ENCODE measurements at regions of chr11 and their contacts with region 1.

Region 1: GRCh38 chr11:45147017-45147728 is 734 bp downstream of the PRDM11 start:
- DNase-seq: peak; percentile 95
- ATAC-seq: peak; percentile 97
- H3K4me3 ChIP-seq: peak overlapping the region; percentile 60 to 92 (median 72)
- H3K4me3 Mint-ChIP-seq: peak overlapping the region; percentile 92
- H3K27ac ChIP-seq: peak overlapping the region; percentile 63 to 86
- H3K27ac Mint-ChIP-seq: peak overlapping the region; percentile 95
- H3K4me1 ChIP-seq: peaks cover 19 to 27% of the 10 kb centered on the region in 2 donors
- H3K4me1 Mint-ChIP-seq: peaks cover 42% of the 10 kb centered on the region
- H3K27me3 ChIP-seq: peaks cover 0 to 12% (median 8%) of the 10 kb centered on the region in 4 experiments
- H3K27me3 Mint-ChIP-seq: peaks cover 12% of the 10 kb centered on the region
- CTCF ChIP-seq: no peak

Region 2: GRCh38 chr11:44943118-44943517 is 204.1 kb before region 1 on chr11:
- CTCF ChIA-PET with region 1: no interaction called
- POLR2A ChIA-PET with region 1: no interaction called
- intact Hi-C with region 1: loop called (anchors 2 kb)
- DNase-seq: peak; percentile 89
- ATAC-seq: peak; percentile 93
- H3K4me3 ChIP-seq: peak overlapping the region in 4 of 5 experiments; percentile 10 to 53 (median 26)
- H3K4me3 Mint-ChIP-seq: peak overlapping the region; percentile 90
- H3K27ac ChIP-seq: peak overlapping the region; percentile 38 to 67
- H3K27ac Mint-ChIP-seq: peak overlapping the region; percentile 95
- H3K4me1 ChIP-seq: peaks cover 57 to 74% of the 10 kb centered on the region in 2 donors
- H3K4me1 Mint-ChIP-seq: peaks cover 92% of the 10 kb centered on the region
- H3K27me3 ChIP-seq: no peaks in the 10 kb centered on the region
- H3K27me3 Mint-ChIP-seq: no peaks in the 10 kb centered on the region
- CTCF ChIP-seq: no peak

Region 3: DNA sequence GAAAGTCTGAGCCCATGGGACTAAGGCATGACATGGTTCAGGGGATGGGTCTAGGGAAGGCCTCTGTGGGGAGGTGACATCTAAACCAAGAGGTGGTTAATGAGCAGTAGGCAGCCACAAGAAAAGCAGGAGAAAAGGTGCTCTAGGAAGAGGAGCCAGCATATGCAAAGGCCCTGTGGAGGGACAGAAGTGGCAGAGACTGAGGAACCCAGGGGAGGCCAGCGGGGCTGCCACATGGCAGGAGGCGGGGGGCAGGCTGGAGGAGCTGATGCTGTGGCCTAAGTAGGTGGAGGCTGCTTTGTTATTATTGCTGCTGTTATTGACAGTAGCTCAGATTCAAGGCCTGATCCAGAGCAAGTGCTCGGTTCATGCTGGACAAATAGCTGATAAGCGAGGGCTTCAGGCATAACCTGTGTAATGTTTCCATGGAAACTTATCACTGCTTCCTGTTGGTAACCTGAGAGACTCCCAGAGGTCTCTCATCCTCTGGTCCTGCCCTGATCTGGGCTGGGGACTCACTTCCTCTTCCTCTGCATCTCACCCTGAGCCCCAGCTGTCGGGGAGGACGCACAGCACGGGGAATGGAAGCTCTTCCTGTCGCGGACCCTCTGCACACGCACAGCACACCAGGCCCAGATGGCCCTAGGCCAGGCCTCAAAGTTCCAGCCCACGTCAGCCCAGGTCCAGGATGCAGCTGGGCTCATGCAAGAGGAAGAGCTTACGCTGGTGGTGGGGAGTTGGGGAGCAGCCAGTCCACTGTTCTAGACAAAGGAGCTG is 121.3 kb before region 1 on chr11:
- CTCF ChIA-PET with region 1: no interaction called
- POLR2A ChIA-PET with region 1: interaction called, 3 read pairs
- intact Hi-C with region 1: loop called (anchors 5 kb)
- DNase-seq: peak; percentile 82
- ATAC-seq: peak; percentile 50
- H3K4me3 ChIP-seq: no peak overlapping the region
- H3K4me3 Mint-ChIP-seq: peak overlapping the region; percentile 51
- H3K27ac ChIP-seq: peak overlapping the region; percentile 72 to 79
- H3K27ac Mint-ChIP-seq: peak overlapping the region; percentile 96
- H3K4me1 ChIP-seq: peaks cover 46 to 58% of the 10 kb centered on the region in 2 donors
- H3K4me1 Mint-ChIP-seq: peaks cover 66% of the 10 kb centered on the region
- H3K27me3 ChIP-seq: peaks cover 0 to 2% (median 0%) of the 10 kb centered on the region in 4 experiments
- H3K27me3 Mint-ChIP-seq: no peaks in the 10 kb centered on the region
- CTCF ChIP-seq: no peak

Region 4: GRCh38 chr11:45339729-45340519 is 192.8 kb after region 1 on chr11:
- CTCF ChIA-PET with region 1: no interaction called
- POLR2A ChIA-PET with region 1: no interaction called
- intact Hi-C with region 1: loop called (anchors 1 kb)
- DNase-seq: peak; percentile 93
- ATAC-seq: peak; percentile 100
- H3K4me3 ChIP-seq: peak overlapping the region; percentile 23 to 65 (median 50)
- H3K4me3 Mint-ChIP-seq: peak overlapping the region; percentile 92
- H3K27ac ChIP-seq: no peak overlapping the region
- H3K27ac Mint-ChIP-seq: peak overlapping the region; percentile 76
- H3K4me1 ChIP-seq: peaks cover 8 to 13% of the 10 kb centered on the region in 2 donors
- H3K4me1 Mint-ChIP-seq: peaks cover 18% of the 10 kb centered on the region
- H3K27me3 ChIP-seq: peaks cover 0 to 4% (median 2%) of the 10 kb centered on the region in 4 experiments
- H3K27me3 Mint-ChIP-seq: peaks cover 26% of the 10 kb centered on the region
- CTCF ChIP-seq: peak; percentile 90

Region 5: GRCh38 chr11:46700241-46701077 is 1553.3 kb after region 1 on chr11 and contains the starts of genes ARHGAP1 and ZNF408:
- CTCF ChIA-PET with region 1: no interaction called
- POLR2A ChIA-PET with region 1: no interaction called
- intact Hi-C with region 1: loop called (anchors 5 kb)
- DNase-seq: peak; percentile 99
- ATAC-seq: peak; percentile 90
- H3K4me3 ChIP-seq: peak within 1 kb of the TSS; percentile 87 to 100 (median 98)
- H3K4me3 Mint-ChIP-seq: peak within 1 kb of the TSS; percentile 96
- H3K27ac ChIP-seq: peak within 1 kb of the TSS; percentile 47 to 86
- H3K27ac Mint-ChIP-seq: peak within 1 kb of the TSS; percentile 93
- H3K4me1 ChIP-seq: peaks cover 30 to 39% of the 10 kb centered on the region in 2 donors
- H3K4me1 Mint-ChIP-seq: peaks cover 43% of the 10 kb centered on the region
- H3K27me3 ChIP-seq: no peaks in the 10 kb centered on the region
- H3K27me3 Mint-ChIP-seq: no peaks in the 10 kb centered on the region
- CTCF ChIP-seq: no peak
- total RNA-seq, gene ARHGAP1: 55.0 and 56.8 TPM in 2 replicates
- total RNA-seq, gene ZNF408: 19.2 and 22.3 TPM in 2 replicates

Measured in B cell (primary cell).